OCI-LY7 (cell line): ENCODE measurements at regions of chr5 and their contacts with region 1.

Region 1: GRCh38 chr5:124980163-124980941 is 233.9 kb upstream of the ZNF608 start:
- DNase-seq: peak; percentile 91
- H3K4me3 ChIP-seq: peak overlapping the region; percentile 56
- H3K27ac ChIP-seq: peak overlapping the region; percentile 98
- H3K4me1 ChIP-seq: peaks cover 44% of the 10 kb centered on the region
- CTCF ChIP-seq: no peak

Region 2: GRCh38 chr5:124871303-124871702 is 109.0 kb before region 1 on chr5:
- CTCF ChIA-PET with region 1: no interaction called
- POLR2A ChIA-PET with region 1: no interaction called
- intact Hi-C with region 1: no loop called
- DNase-seq: no peak
- H3K4me3 ChIP-seq: no peak overlapping the region
- H3K27ac ChIP-seq: no peak overlapping the region
- H3K4me1 ChIP-seq: no peaks in the 10 kb centered on the region
- CTCF ChIP-seq: no peak

Region 3: GRCh38 chr5:124952079-124952478 is 28.3 kb before region 1 on chr5:
- CTCF ChIA-PET with region 1: no interaction called
- POLR2A ChIA-PET with region 1: interaction called, 9 read pairs
- intact Hi-C with region 1: loop called (anchors 2 kb)
- DNase-seq: peak; percentile 61
- H3K4me3 ChIP-seq: peak overlapping the region; percentile 38
- H3K27ac ChIP-seq: peak overlapping the region; percentile 56
- H3K4me1 ChIP-seq: peaks cover 22% of the 10 kb centered on the region
- CTCF ChIP-seq: no peak

Region 4: DNA sequence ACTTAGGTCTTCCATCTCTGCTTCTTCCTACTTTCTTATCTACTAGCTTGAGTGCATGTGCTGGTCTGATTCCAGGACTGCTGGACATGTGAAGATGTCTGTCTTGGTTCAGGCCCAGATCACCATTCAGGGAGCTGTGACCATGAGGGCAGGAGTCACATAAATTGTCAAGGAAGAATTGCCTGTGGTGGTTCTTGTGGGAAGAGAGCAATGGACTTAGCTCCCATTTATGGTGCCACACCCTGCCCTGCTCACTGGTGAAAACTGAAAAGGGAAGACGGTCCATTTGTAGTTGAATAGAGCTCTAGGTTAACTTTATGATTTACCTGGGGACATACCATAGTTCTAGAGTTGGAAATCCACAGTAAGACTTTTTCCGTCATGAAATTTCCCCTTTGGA is 10.4 kb after region 1 on chr5:
- CTCF ChIA-PET with region 1: interaction called, 3 read pairs
- POLR2A ChIA-PET with region 1: interaction called, 13 read pairs
- intact Hi-C with region 1: no loop called
- DNase-seq: no peak
- H3K4me3 ChIP-seq: no peak overlapping the region
- H3K27ac ChIP-seq: no peak overlapping the region
- H3K4me1 ChIP-seq: peaks cover 18% of the 10 kb centered on the region
- CTCF ChIP-seq: no peak

Region 5: DNA sequence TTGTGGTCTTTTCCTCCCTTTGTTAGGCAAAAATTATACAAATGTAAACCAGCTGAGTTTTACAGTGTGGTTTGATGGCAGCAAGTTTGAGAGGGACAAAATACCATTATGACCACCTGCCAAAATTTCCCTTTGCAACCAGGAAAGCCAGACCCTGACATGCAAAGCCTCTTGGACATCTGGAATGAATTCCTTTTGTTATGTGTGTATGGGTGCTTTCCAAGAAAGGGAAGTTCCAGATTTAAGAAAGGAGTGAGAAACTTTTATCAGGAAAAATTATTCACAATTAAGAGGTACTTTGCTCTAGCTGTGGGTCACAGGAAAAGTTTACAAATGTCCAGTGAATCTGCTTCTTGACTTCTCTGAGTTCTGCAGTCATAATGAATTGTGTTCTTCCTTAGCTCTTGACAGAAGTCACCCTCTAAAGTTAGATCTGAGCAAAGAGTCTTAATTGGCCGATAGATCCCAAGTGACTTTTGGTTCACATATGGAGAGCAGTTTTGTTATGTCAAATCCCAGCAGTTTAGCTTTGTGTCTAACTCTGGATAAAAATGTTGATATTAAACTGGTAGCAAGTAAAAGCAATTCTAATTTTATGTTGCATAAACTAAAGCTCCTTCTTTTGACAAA is 62.0 kb after region 1 on chr5:
- CTCF ChIA-PET with region 1: no interaction called
- POLR2A ChIA-PET with region 1: no interaction called
- intact Hi-C with region 1: no loop called
- DNase-seq: no peak
- H3K4me3 ChIP-seq: no peak overlapping the region
- H3K27ac ChIP-seq: no peak overlapping the region
- H3K4me1 ChIP-seq: peaks cover 29% of the 10 kb centered on the region
- CTCF ChIP-seq: no peak

Region 6: GRCh38 chr5:125326150-125326510 is 345.8 kb after region 1 on chr5:
- CTCF ChIA-PET with region 1: no interaction called
- POLR2A ChIA-PET with region 1: no interaction called
- intact Hi-C with region 1: no loop called
- DNase-seq: no peak
- H3K4me3 ChIP-seq: no peak overlapping the region
- H3K27ac ChIP-seq: no peak overlapping the region
- H3K4me1 ChIP-seq: no peaks in the 10 kb centered on the region
- CTCF ChIP-seq: no peak